Activated naive CD4-positive, alpha-beta T cell treated with anti-CD3 and anti-CD28 coated beads for 36 hours (primary cell): ENCODE measurements at regions of chr6 and their contacts with region 1.

Region 1: DNA sequence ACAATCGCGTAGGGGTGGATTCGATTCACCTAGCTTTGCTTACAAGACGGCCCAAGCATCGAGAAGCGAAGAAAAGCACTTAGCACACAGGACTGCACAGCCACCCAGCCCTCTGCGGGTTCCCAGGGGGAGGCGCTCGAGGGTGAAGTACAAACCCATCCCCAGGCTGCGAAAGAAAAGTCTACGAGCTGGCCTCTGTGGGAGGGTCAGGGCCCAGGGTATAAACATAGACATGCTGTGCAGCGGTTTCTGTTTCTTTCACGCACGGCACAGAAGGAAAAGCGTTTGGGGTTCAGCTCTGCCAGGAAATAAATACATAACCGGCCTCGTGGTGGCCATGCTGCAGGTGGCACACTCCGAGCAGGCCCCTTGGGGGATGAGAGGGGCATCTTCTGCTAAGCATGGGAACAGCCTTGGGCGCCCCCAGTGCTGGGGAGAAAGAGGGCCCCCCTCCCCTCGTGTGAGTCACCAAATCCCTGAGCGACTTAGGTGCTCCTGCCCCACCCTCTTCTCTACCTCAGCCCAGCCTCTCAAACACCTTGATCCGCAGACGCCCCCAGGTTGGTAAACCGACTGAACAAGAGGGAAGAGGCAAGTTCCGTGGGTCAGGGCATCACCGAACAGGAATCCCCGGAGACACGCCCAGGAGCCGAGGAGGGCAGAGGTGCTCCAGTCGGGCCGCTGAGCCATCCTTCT is 91.6 kb upstream of the RIPOR2 start:
- DNase-seq: peak; percentile 90
- H3K4me3 Mint-ChIP-seq: peak overlapping the region; percentile 65
- H3K27ac Mint-ChIP-seq: peak overlapping the region; percentile 78
- H3K4me1 Mint-ChIP-seq: peaks cover 52% of the 10 kb centered on the region
- H3K27me3 Mint-ChIP-seq: no peaks in the 10 kb centered on the region

Region 2: DNA sequence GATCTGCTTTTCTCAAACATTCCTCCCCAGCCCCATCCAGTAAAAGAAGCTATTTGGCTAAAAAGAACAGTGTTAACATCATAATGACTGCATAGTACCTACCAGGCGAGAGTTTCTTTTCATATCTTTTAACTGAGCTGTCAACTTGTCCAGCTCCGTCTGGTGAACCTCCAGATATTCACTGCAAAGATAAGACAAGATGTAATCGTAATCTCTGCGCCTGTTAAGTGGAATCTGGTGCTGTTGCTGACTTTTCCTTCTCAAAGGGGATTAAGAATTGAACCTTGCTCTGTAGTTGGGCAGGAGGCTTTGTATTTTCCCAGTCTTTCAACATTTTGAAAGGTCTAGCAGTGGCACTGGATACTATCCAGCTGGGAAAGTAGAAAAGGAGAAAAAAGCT is 154.6 kb before region 1 on chr6:
- CTCF ChIA-PET with region 1: no interaction called
- intact Hi-C with region 1: no loop called
- DNase-seq: no peak
- H3K4me3 Mint-ChIP-seq: no peak overlapping the region
- H3K27ac Mint-ChIP-seq: peak overlapping the region; percentile 17
- H3K4me1 Mint-ChIP-seq: peaks cover 65% of the 10 kb centered on the region
- H3K27me3 Mint-ChIP-seq: no peaks in the 10 kb centered on the region

Region 3: DNA sequence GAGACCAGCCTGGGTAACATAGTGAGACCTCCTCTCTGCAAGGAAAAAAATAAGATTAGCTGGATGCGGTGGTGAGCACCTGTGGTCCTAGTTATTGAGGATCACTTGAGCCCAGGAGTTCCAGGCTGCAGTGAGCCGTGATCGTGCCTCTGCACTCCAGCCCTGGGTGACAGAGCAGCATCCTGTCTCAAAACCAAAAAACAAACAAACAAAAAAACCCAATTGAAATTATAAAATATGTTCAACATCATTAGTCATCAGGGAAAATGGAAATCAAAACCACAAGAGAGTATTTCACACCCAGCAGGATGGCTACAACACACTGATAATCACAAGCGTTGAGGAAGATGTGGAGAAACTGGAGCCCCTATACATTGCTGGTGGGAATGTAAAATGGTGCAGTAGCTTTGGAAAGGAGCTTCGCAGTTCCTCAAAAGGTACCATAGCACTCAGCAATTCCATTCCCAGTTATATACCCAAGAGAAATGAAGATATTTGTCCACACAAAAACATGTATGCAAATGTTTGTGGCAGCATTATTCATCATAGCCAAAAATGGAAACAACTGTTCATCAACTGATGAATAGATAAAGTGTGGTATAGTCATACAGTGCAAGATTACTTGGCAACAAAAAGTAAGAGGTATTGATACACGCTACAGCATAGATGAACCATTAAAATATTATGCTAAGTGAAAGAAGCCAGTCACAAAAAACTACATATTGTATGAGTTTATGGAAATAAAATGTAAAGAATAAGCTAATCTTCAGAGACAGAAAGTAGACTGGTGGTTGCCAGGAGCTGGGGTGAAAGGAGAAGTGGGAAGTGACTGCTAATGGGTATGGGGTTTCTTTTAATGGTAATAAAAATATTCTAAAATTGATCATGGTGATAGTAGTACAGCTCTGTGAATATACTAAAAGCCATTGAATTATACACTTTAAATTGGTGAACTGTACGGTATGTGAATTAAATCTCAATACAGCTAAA is 52.9 kb before region 1 on chr6:
- CTCF ChIA-PET with region 1: interaction called, 6 read pairs
- intact Hi-C with region 1: loop called (anchors 2 kb)
- DNase-seq: peak; percentile 59
- H3K4me3 Mint-ChIP-seq: peak overlapping the region; percentile 16
- H3K27ac Mint-ChIP-seq: peak overlapping the region; percentile 92
- H3K4me1 Mint-ChIP-seq: peaks cover 58% of the 10 kb centered on the region
- H3K27me3 Mint-ChIP-seq: no peaks in the 10 kb centered on the region

Region 4: GRCh38 chr6:25042036-25042521 is 14.7 kb after region 1 on chr6:
- CTCF ChIA-PET with region 1: interaction called, 110 read pairs
- intact Hi-C with region 1: loop called (anchors 1 kb)
- DNase-seq: peak; percentile 73
- H3K4me3 Mint-ChIP-seq: peak overlapping the region; percentile 92
- H3K27ac Mint-ChIP-seq: peak overlapping the region; percentile 97
- H3K4me1 Mint-ChIP-seq: peaks cover 66% of the 10 kb centered on the region
- H3K27me3 Mint-ChIP-seq: no peaks in the 10 kb centered on the region

Region 5: GRCh38 chr6:25061289-25061936 is 34.0 kb after region 1 on chr6:
- CTCF ChIA-PET with region 1: interaction called, 41 read pairs
- intact Hi-C with region 1: loop called (anchors 1 kb)
- DNase-seq: no peak
- H3K4me3 Mint-ChIP-seq: no peak overlapping the region
- H3K27ac Mint-ChIP-seq: no peak overlapping the region
- H3K4me1 Mint-ChIP-seq: peaks cover 17% of the 10 kb centered on the region
- H3K27me3 Mint-ChIP-seq: no peaks in the 10 kb centered on the region

Region 6: GRCh38 chr6:25250878-25251277 is 223.5 kb after region 1 on chr6:
- CTCF ChIA-PET with region 1: no interaction called
- intact Hi-C with region 1: loop called (anchors 1 kb)
- DNase-seq: peak; percentile 76
- H3K4me3 Mint-ChIP-seq: no peak overlapping the region
- H3K27ac Mint-ChIP-seq: peak overlapping the region; percentile 62
- H3K4me1 Mint-ChIP-seq: peaks cover 12% of the 10 kb centered on the region
- H3K27me3 Mint-ChIP-seq: no peaks in the 10 kb centered on the region